Ovary (tissue), 10 donors: ENCODE measurements at regions of chr7 and their contacts with region 1.

Region 1: DNA sequence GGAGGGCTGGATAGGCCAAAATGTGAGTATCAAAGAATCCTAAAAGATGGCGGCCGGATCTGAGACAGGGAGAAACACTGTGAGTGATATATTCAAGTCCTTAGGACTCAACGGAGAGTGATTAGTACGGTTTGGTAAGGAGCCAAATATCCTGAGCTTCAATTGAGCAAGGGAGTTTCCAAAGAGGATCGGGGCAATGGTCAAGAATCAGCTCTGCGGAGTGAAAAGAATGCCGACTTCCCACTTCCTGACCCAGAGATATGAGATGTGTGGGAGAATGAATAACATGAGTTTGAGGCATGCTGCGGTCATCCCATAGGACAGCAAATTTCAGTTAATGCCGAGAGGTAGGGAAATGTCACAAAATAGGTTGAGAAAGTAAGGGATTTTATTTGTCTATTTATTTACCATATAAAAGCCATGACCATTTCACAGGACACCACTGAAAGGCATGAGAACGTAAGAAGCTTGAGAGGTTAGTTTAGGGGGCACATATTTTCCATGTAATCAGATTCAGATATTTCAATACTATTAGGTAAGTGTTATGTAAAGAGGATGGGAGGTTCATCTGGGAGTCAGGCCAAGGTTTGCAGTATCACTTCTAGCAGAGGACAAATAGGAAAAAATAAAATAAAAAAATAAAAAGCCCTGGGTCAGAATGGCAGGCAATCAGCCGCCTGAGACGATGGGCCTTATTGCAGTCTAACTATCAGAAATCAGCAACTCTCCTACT is 165.6 kb downstream of the HGF start:
- DNase-seq: no peak
- H3K4me3 ChIP-seq: no peak overlapping the region
- H3K27ac ChIP-seq: no peak overlapping the region
- H3K4me1 ChIP-seq: no peaks in the 10 kb centered on the region
- H3K27me3 ChIP-seq: no peaks in the 10 kb centered on the region
- CTCF ChIP-seq: no peak
- EP300 ChIP-seq: no peak
- POLR2A ChIP-seq: no peak

Region 2: GRCh38 chr7:81659697-81660395 is 55.6 kb after region 1 on chr7:
- intact Hi-C with region 1: loop called in 1 of 4 experiments (anchors 10 kb)
- DNase-seq: no peak
- H3K4me3 ChIP-seq: no peak overlapping the region
- H3K27ac ChIP-seq: no peak overlapping the region
- H3K4me1 ChIP-seq: no peaks in the 10 kb centered on the region
- H3K27me3 ChIP-seq: no peaks in the 10 kb centered on the region
- CTCF ChIP-seq: no peak
- EP300 ChIP-seq: no peak
- POLR2A ChIP-seq: no peak

Region 3: DNA sequence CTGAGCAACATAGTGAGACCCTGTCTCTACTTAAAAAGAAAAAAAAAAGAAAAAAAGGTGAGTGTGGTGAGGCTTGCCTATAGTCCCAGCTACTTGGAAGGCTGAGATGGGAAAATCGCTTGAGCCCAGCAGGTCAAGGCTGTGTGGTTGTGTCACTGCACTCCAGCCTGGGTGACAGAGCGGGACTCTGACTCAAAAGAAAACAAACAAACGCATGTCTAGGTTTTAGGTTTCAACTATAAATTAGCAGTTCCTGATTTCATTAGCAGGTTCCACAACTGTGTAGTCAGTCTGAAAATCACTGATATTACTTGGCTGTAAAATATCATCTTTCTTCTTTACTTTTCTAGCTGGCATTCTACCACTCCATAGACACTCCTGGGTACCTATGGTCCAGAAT is 321.3 kb after region 1 on chr7:
- intact Hi-C with region 1: no loop called
- DNase-seq: no peak
- H3K4me3 ChIP-seq: no peak overlapping the region
- H3K27ac ChIP-seq: no peak overlapping the region
- H3K4me1 ChIP-seq: no peaks in the 10 kb centered on the region
- H3K27me3 ChIP-seq: no peaks in the 10 kb centered on the region
- CTCF ChIP-seq: no peak
- EP300 ChIP-seq: no peak
- POLR2A ChIP-seq: no peak